Common myeloid progenitor, CD34-positive (primary cell): ENCODE measurements at regions of chr10 and their contacts with region 1.

Region 1: DNA sequence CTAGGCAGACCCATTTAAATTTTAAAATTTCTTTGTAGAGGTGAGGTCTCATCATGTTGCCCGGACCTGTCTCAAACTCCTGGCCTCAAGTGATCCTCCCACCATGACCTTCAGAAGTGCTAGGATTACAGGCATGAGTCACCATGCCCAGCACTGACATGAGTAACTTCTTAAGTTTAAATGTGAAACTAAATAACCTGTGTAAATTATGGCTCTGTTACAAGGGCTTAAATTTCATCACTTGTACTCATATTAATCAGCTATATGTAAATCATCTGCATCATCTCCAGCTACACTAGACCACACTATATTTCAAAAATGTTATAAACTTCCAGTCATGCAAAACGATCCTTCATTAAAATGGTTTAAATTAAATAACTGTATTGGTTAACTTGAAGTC is 56.1 kb downstream of the ATAD1 start:
- DNase-seq: peak in 2 of 3 donors; percentile 69 to 76
- H3K4me3 ChIP-seq: no peak overlapping the region
- H3K27ac ChIP-seq: peak overlapping the region in 1 of 2 experiments; percentile 14
- H3K4me1 ChIP-seq: peaks cover 0 to 21% (median 7%) of the 10 kb centered on the region in 4 experiments
- H3K27me3 ChIP-seq: no peaks in the 10 kb centered on the region

Region 2: GRCh38 chr10:87705346-87705745 is 56.5 kb before region 1 on chr10:
- CTCF ChIA-PET with region 1: no interaction called
- POLR2A ChIA-PET with region 1: no interaction called
- DNase-seq: no peak
- H3K4me3 ChIP-seq: no peak overlapping the region
- H3K27ac ChIP-seq: no peak overlapping the region
- H3K4me1 ChIP-seq: no peaks in the 10 kb centered on the region
- H3K27me3 ChIP-seq: no peaks in the 10 kb centered on the region

Region 3: GRCh38 chr10:87750001-87750671 is 11.8 kb before region 1 on chr10:
- CTCF ChIA-PET with region 1: interaction called, 12 read pairs
- POLR2A ChIA-PET with region 1: no interaction called
- DNase-seq: peak; percentile 12 to 60 (median 42)
- H3K4me3 ChIP-seq: no peak overlapping the region
- H3K27ac ChIP-seq: no peak overlapping the region
- H3K4me1 ChIP-seq: peaks cover 4 to 17% (median 10%) of the 10 kb centered on the region in 4 experiments
- H3K27me3 ChIP-seq: no peaks in the 10 kb centered on the region